Naive thymus-derived CD4-positive, alpha-beta T cell (primary cell): ENCODE measurements at regions of chr18 and their contacts with region 1.

Region 1: GRCh38 chr18:63422087-63422809 is at the start of gene VPS4B:
- DNase-seq: peak; percentile 99 to 100 (median 99)
- ATAC-seq: peak; percentile 97
- H3K4me3 ChIP-seq: peak within 1 kb of the TSS; percentile 96
- H3K4me3 Mint-ChIP-seq: peak within 1 kb of the TSS; percentile 88 to 100 (median 97)
- H3K27ac ChIP-seq: peak within 1 kb of the TSS; percentile 95
- H3K27ac Mint-ChIP-seq: peak within 1 kb of the TSS; percentile 94 to 100 (median 98)
- H3K4me1 ChIP-seq: peaks cover 17 to 22% of the 10 kb centered on the region in 2 donors
- H3K4me1 Mint-ChIP-seq: peaks cover 6 to 34% (median 26%) of the 10 kb centered on the region in 7 donors
- H3K27me3 ChIP-seq: no peaks in the 10 kb centered on the region
- H3K27me3 Mint-ChIP-seq: peaks cover 0 to 5% (median 2%) of the 10 kb centered on the region in 5 donors
- total RNA-seq, gene VPS4B: 48.2 to 84.6 (median 74.9) TPM

Region 2: DNA sequence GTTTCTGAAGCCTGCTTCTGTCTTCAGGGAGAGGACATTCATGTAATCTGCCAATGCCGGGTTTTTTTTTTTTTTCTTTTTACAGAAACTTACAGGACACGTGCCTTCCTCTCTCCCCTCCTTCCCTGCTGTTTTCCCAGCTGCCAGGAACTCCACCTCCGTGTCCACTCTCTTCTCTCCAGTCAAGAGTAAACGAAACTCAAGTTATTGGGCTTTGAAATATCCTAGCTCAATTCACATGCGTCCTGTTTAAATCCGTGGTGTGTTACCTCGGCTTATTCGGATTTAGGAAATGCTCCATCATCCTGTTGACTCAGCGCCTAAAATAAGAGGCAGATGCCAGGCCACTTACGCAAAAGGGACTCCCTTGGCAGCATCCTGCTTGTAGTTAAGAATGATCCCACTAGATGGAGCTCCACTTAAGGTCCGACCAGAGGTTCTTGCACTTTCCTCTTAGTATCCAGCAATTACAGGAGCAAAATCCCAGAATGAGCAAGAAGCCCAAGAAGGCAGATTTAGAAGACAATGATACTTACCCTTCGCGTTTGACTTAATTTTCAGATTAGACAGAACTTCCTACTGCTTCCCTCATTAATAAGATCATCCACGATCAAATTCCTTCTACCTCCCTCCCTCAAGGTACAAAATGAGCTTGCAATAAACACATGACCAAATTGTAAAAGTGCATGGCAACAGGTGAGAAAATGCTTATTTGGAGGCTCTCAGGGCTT is 996.6 kb before region 1 on chr18:
- CTCF ChIA-PET with region 1: no interaction called
- POLR2A ChIA-PET with region 1: interaction called, 4 read pairs
- intact Hi-C with region 1: loop called (anchors 2 kb)
- DNase-seq: peak in 8 of 9 donors; percentile 41 to 67 (median 57)
- ATAC-seq: peak; percentile 82
- H3K4me3 ChIP-seq: no peak overlapping the region
- H3K4me3 Mint-ChIP-seq: peak overlapping the region in 1 of 10 donors; percentile 52
- H3K27ac ChIP-seq: no peak overlapping the region
- H3K27ac Mint-ChIP-seq: peak overlapping the region in 5 of 9 donors; percentile 16 to 64 (median 39)
- H3K4me1 ChIP-seq: peaks cover 0 to 6% of the 10 kb centered on the region in 2 donors
- H3K4me1 Mint-ChIP-seq: peaks cover 11 to 54% (median 18%) of the 10 kb centered on the region in 7 donors
- H3K27me3 ChIP-seq: no peaks in the 10 kb centered on the region
- H3K27me3 Mint-ChIP-seq: peaks cover 0 to 4% (median 2%) of the 10 kb centered on the region in 5 donors

Region 3: GRCh38 chr18:62844850-62845643 is 577.2 kb before region 1 on chr18:
- CTCF ChIA-PET with region 1: no interaction called
- POLR2A ChIA-PET with region 1: no interaction called
- intact Hi-C with region 1: loop called in 1 of 2 experiments (anchors 10 kb)
- DNase-seq: no peak
- ATAC-seq: no peak
- H3K4me3 ChIP-seq: no peak overlapping the region
- H3K4me3 Mint-ChIP-seq: peak overlapping the region in 1 of 10 donors; percentile 83
- H3K27ac ChIP-seq: no peak overlapping the region
- H3K27ac Mint-ChIP-seq: peak overlapping the region in 1 of 9 donors; percentile 90
- H3K4me1 ChIP-seq: no peaks in the 10 kb centered on the region
- H3K4me1 Mint-ChIP-seq: peaks cover 0 to 33% (median 0%) of the 10 kb centered on the region in 7 donors
- H3K27me3 ChIP-seq: no peaks in the 10 kb centered on the region
- H3K27me3 Mint-ChIP-seq: no peaks in the 10 kb centered on the region

Region 4: DNA sequence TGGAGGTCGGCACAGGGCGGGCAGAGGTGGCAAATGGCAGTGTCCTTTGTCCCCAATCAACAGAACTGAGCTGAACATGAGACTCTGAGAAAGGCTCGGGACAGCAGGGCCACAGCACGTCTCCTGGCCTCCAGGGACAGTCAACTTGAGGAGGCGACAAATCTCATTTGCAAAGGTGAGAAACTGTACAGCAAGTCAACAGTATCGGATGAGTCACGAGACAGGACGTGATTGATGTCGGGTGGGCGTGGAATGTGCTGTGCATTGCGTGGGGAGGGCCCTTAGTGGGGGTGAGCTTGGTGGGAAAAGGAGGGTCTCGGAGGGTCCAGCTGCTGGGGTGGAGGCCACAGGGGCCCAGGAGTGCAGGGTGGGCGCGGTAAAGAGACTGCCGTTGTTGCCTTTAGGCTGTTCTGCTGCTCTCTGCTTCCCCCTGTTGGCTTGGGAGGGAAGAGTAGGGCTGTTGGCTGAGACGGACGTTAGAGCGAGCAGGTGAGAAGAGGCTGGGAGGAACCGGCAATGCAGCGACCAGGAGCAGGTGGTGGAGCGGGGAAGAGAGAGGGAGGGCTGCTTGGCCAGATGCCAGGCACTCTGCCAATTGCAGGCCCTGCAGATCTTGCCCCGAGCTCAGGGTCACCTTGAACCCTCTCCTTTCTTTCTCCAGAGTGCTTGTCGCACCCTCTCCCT is 266.9 kb before region 1 on chr18:
- CTCF ChIA-PET with region 1: no interaction called
- POLR2A ChIA-PET with region 1: interaction called, 5 read pairs
- intact Hi-C with region 1: loop called in 1 of 2 experiments (anchors 1 kb)
- DNase-seq: peak; percentile 64 to 89 (median 80)
- ATAC-seq: peak; percentile 85
- H3K4me3 ChIP-seq: peak overlapping the region; percentile 56
- H3K4me3 Mint-ChIP-seq: peak overlapping the region; percentile 78 to 99 (median 88)
- H3K27ac ChIP-seq: peak overlapping the region; percentile 90
- H3K27ac Mint-ChIP-seq: peak overlapping the region; percentile 77 to 99 (median 95)
- H3K4me1 ChIP-seq: peaks cover 89 to 92% of the 10 kb centered on the region in 2 donors
- H3K4me1 Mint-ChIP-seq: peaks cover 80 to 100% (median 100%) of the 10 kb centered on the region in 7 donors
- H3K27me3 ChIP-seq: no peaks in the 10 kb centered on the region
- H3K27me3 Mint-ChIP-seq: no peaks in the 10 kb centered on the region

Region 5: DNA sequence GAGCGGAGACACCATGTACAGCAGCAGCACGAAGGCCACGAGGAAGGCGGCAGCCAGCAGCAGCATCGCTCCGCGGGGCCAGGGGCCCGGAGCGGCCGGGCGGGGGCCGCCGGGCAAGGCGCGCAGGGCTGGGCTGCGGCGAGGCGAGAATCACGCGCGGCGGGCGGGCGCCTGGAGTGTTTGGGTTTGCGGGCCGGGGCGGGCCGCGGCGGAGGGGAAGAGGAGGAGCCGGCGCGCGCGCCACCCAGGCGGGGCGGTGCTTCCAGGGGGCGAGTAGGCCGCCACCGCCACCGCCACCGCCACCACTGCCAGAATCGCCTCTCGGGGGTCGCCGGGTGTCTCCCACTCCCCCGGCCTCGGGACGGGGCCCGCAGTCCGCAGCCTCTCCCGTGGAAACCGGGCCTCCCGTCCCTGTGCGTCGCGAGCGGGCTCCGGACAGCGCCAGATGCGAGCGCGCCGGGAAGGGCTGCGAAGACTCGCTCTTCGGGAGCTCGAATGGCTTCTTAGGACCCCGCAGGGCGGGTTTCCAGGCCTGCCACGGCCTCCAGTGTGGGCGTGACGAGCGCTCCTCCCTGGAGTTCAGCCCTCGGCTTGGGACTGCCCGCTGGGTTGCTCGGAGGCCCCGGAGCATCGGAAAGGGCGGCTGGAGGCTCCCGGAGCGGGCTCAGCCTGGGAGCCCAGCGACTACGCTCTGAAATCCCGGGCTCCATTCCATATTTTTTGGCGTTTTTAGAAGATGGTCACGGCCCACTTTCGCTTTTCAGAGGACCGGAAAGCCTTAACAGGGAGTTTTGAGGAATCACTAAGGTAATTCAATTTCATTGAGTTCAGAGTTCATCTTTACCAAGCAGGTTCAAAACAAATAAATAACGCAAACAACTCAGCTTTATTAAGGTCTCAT is 54.9 kb before region 1 on chr18 and contains the start of gene KDSR:
- CTCF ChIA-PET with region 1: no interaction called
- POLR2A ChIA-PET with region 1: interaction called, 19 read pairs
- intact Hi-C with region 1: loop called (anchors 1 kb)
- DNase-seq: peak; percentile 71 to 90 (median 79)
- ATAC-seq: peak; percentile 92
- H3K4me3 ChIP-seq: peak within 1 kb of the TSS; percentile 92
- H3K4me3 Mint-ChIP-seq: peak within 1 kb of the TSS; percentile 85 to 99 (median 94)
- H3K27ac ChIP-seq: peak within 1 kb of the TSS; percentile 77
- H3K27ac Mint-ChIP-seq: peak within 1 kb of the TSS; percentile 84 to 92 (median 89)
- H3K4me1 ChIP-seq: peaks cover 6 to 29% of the 10 kb centered on the region in 2 donors
- H3K4me1 Mint-ChIP-seq: peaks cover 32 to 56% (median 41%) of the 10 kb centered on the region in 7 donors
- H3K27me3 ChIP-seq: no peaks in the 10 kb centered on the region
- H3K27me3 Mint-ChIP-seq: no peaks in the 10 kb centered on the region
- total RNA-seq, gene KDSR: 24.4 to 57.9 (median 46.9) TPM

Region 6: DNA sequence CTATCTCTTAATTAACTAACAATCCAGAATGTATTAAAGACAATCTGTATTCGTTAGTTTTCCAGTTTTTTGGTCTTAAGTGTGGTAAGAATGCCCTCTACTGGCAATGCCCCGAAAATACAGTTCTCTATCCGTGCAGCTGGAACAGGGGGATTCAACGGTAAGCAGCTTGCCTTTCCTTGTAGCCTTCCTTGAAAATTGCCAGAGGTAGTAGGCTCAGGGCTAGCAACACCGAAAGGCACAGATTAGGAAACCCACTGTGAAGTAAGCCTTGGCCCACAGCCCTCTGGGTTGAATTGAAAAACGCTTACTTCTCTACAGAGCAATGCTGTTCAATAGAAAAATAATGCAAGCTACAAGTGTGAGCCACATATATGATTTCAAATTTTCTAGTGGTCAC is 17.1 kb after region 1 on chr18:
- CTCF ChIA-PET with region 1: interaction called, 5 read pairs
- POLR2A ChIA-PET with region 1: no interaction called
- intact Hi-C with region 1: loop called (anchors 1 to 2 kb)
- DNase-seq: peak; percentile 12 to 64 (median 49)
- ATAC-seq: peak; percentile 81
- H3K4me3 ChIP-seq: no peak overlapping the region
- H3K4me3 Mint-ChIP-seq: no peak overlapping the region
- H3K27ac ChIP-seq: no peak overlapping the region
- H3K27ac Mint-ChIP-seq: no peak overlapping the region
- H3K4me1 ChIP-seq: no peaks in the 10 kb centered on the region
- H3K4me1 Mint-ChIP-seq: peaks cover 0 to 4% (median 3%) of the 10 kb centered on the region in 7 donors
- H3K27me3 ChIP-seq: no peaks in the 10 kb centered on the region
- H3K27me3 Mint-ChIP-seq: peaks cover 0 to 43% (median 5%) of the 10 kb centered on the region in 5 donors